Endothelial cell of umbilical vein (primary cell): ENCODE measurements at regions of chr10 and their contacts with region 1.

Region 1: GRCh38 chr10:21525367-21526183 is at the start of gene SKIDA1:
- DNase-seq: peak; percentile 90
- H3K4me3 ChIP-seq: peak within 1 kb of the TSS; percentile 48 to 81 (median 53)
- H3K27ac ChIP-seq: peak within 1 kb of the TSS; percentile 97
- H3K4me1 ChIP-seq: peaks cover 29% of the 10 kb centered on the region
- H3K27me3 ChIP-seq: no peaks in the 10 kb centered on the region
- CTCF ChIP-seq: no peak
- POLR2A ChIP-seq: peak; percentile 71
- total RNA-seq, gene SKIDA1: 0.71 and 0.83 TPM in 2 replicates

Region 2: GRCh38 chr10:21329995-21330627 is 195.5 kb before region 1 on chr10:
- CTCF ChIA-PET with region 1: no interaction called
- POLR2A ChIA-PET with region 1: no interaction called
- dilution Hi-C with region 1: no loop called
- intact Hi-C with region 1: loop called (anchors 2 kb)
- DNase-seq: peak; percentile 95
- H3K4me3 ChIP-seq: peak overlapping the region in 1 of 3 experiments; percentile 40
- H3K27ac ChIP-seq: peak overlapping the region; percentile 97
- H3K4me1 ChIP-seq: peaks cover 21% of the 10 kb centered on the region
- H3K27me3 ChIP-seq: no peaks in the 10 kb centered on the region
- CTCF ChIP-seq: no peak
- POLR2A ChIP-seq: no peak

Region 3: GRCh38 chr10:21364196-21365114 is 161.1 kb before region 1 on chr10:
- CTCF ChIA-PET with region 1: no interaction called
- POLR2A ChIA-PET with region 1: no interaction called
- dilution Hi-C with region 1: no loop called
- intact Hi-C with region 1: loop called (anchors 2 kb)
- DNase-seq: peak; percentile 97
- H3K4me3 ChIP-seq: no peak overlapping the region
- H3K27ac ChIP-seq: peak overlapping the region; percentile 96
- H3K4me1 ChIP-seq: peaks cover 40% of the 10 kb centered on the region
- H3K27me3 ChIP-seq: no peaks in the 10 kb centered on the region
- CTCF ChIP-seq: no peak
- POLR2A ChIP-seq: no peak

Region 4: GRCh38 chr10:21424459-21424861 is 101.1 kb before region 1 on chr10:
- CTCF ChIA-PET with region 1: no interaction called
- POLR2A ChIA-PET with region 1: no interaction called
- dilution Hi-C with region 1: no loop called
- intact Hi-C with region 1: no loop called
- DNase-seq: no peak
- H3K4me3 ChIP-seq: no peak overlapping the region
- H3K27ac ChIP-seq: no peak overlapping the region
- H3K4me1 ChIP-seq: no peaks in the 10 kb centered on the region
- H3K27me3 ChIP-seq: no peaks in the 10 kb centered on the region
- CTCF ChIP-seq: no peak
- POLR2A ChIP-seq: no peak

Region 5: GRCh38 chr10:21732067-21732772 is 206.6 kb after region 1 on chr10:
- CTCF ChIA-PET with region 1: interaction called, 13 read pairs
- POLR2A ChIA-PET with region 1: no interaction called
- dilution Hi-C with region 1: no loop called
- intact Hi-C with region 1: loop called (anchors 2 kb)
- DNase-seq: peak; percentile 78
- H3K4me3 ChIP-seq: no peak overlapping the region
- H3K27ac ChIP-seq: no peak overlapping the region
- H3K4me1 ChIP-seq: peaks cover 20% of the 10 kb centered on the region
- H3K27me3 ChIP-seq: no peaks in the 10 kb centered on the region
- CTCF ChIP-seq: peak; percentile 93 to 95
- POLR2A ChIP-seq: no peak

Region 6: GRCh38 chr10:22325272-22326144 is 799.9 kb after region 1 on chr10:
- CTCF ChIA-PET with region 1: no interaction called
- POLR2A ChIA-PET with region 1: no interaction called
- dilution Hi-C with region 1: no loop called
- intact Hi-C with region 1: loop called (anchors 10 kb)
- DNase-seq: peak; percentile 62
- H3K4me3 ChIP-seq: peak overlapping the region; percentile 64 to 83 (median 82)
- H3K27ac ChIP-seq: no peak overlapping the region
- H3K4me1 ChIP-seq: peaks cover 18% of the 10 kb centered on the region
- H3K27me3 ChIP-seq: peaks cover 23 to 32% of the 10 kb centered on the region in 2 experiments
- CTCF ChIP-seq: no peak
- POLR2A ChIP-seq: no peak